ENCODE measurements at regions of chr3 and their contacts with region 1.

Region 1: GRCh38 chr3:12719984-12720898 is 38.8 kb downstream of the TMEM40 start:
- DNase-seq: peak; percentile 75 to 83 (median 78)
- H3K4me3 ChIP-seq: peak overlapping the region in 1 of 2 donors; percentile 22
- H3K4me3 Mint-ChIP-seq: peak overlapping the region; percentile 58 to 82 (median 74)
- H3K27ac ChIP-seq: no peak overlapping the region
- H3K27ac Mint-ChIP-seq: peak overlapping the region; percentile 57 to 95 (median 92)
- H3K4me1 ChIP-seq: peaks cover 5% of the 10 kb centered on the region
- H3K4me1 Mint-ChIP-seq: peaks cover 9 to 15% (median 10%) of the 10 kb centered on the region in 4 donors
- H3K27me3 ChIP-seq: no peaks in the 10 kb centered on the region
- H3K27me3 Mint-ChIP-seq: no peaks in the 10 kb centered on the region

Region 2: DNA sequence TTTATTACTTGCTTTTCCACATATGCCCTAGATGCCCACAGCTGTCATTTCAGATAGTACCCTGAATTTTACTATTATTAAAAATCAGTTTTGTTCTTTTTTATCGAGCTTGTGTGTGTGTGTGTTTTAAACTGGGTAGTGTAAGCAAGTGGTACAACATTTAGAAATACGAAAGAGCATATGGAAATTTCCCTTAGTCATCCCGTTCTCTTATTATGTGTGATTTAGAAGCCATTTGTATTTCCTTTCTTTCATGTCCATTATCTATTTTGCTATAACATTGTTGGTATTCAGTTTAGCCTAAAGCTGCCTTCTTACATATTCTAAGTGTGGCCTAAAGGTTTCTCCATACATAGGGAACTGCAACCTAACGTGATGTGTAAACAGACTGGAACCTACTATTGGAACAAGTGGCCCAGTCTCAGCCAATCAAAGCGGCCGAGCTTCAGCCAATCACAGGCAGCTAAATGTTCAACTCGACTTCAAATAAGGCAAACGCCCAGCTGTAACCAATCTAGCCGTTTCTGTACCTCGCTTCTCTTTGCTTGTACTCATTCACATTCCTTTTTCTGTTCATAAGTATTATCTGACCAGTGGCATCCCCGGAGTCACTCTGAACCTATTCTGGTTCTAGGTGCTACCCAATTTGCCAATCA is 730.7 kb before region 1 on chr3:
- CTCF ChIA-PET with region 1: no interaction called
- POLR2A ChIA-PET with region 1: no interaction called
- intact Hi-C with region 1: no loop called
- DNase-seq: no peak
- H3K4me3 ChIP-seq: no peak overlapping the region
- H3K4me3 Mint-ChIP-seq: no peak overlapping the region
- H3K27ac ChIP-seq: no peak overlapping the region
- H3K27ac Mint-ChIP-seq: no peak overlapping the region
- H3K4me1 ChIP-seq: no peaks in the 10 kb centered on the region
- H3K4me1 Mint-ChIP-seq: no peaks in the 10 kb centered on the region
- H3K27me3 ChIP-seq: no peaks in the 10 kb centered on the region
- H3K27me3 Mint-ChIP-seq: peaks cover 4 to 11% of the 10 kb centered on the region in 2 donors

Region 3: DNA sequence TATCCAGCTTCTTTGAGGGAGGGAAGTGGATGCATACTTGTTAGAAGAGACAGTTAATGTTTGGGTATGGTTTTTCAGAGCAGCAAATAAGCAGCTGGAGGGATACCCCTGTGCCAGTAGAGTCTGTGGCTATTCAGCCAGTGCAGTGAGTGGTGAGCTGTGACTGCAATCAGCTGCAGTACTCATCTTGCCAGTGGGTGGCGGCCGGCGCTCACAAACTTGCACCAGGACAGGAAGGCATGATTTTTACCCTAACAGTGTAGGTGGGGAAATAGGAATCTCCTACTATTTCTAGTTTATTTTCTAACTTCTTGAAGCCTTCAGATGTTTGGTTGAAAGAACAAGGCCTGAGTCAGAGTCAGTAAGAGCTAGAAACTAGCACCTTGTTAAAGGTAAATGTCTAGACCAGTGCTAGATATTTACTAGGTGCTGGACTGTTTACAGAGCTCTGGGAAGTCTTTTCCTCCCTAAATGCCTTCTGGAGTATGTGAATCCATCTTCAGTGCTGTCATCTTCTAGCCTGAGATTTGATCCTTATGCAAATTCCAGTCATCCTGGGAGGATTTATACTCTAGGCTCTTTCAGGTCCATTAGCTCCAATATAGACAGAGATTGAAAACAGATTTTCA is 585.1 kb before region 1 on chr3:
- CTCF ChIA-PET with region 1: interaction called, 10 read pairs
- POLR2A ChIA-PET with region 1: no interaction called
- intact Hi-C with region 1: no loop called
- DNase-seq: peak; percentile 40 to 51 (median 44)
- H3K4me3 ChIP-seq: no peak overlapping the region
- H3K4me3 Mint-ChIP-seq: no peak overlapping the region
- H3K27ac ChIP-seq: no peak overlapping the region
- H3K27ac Mint-ChIP-seq: no peak overlapping the region
- H3K4me1 ChIP-seq: no peaks in the 10 kb centered on the region
- H3K4me1 Mint-ChIP-seq: peaks cover 0 to 2% (median 0%) of the 10 kb centered on the region in 4 donors
- H3K27me3 ChIP-seq: no peaks in the 10 kb centered on the region
- H3K27me3 Mint-ChIP-seq: peaks cover 10 to 20% of the 10 kb centered on the region in 2 donors

Region 4: DNA sequence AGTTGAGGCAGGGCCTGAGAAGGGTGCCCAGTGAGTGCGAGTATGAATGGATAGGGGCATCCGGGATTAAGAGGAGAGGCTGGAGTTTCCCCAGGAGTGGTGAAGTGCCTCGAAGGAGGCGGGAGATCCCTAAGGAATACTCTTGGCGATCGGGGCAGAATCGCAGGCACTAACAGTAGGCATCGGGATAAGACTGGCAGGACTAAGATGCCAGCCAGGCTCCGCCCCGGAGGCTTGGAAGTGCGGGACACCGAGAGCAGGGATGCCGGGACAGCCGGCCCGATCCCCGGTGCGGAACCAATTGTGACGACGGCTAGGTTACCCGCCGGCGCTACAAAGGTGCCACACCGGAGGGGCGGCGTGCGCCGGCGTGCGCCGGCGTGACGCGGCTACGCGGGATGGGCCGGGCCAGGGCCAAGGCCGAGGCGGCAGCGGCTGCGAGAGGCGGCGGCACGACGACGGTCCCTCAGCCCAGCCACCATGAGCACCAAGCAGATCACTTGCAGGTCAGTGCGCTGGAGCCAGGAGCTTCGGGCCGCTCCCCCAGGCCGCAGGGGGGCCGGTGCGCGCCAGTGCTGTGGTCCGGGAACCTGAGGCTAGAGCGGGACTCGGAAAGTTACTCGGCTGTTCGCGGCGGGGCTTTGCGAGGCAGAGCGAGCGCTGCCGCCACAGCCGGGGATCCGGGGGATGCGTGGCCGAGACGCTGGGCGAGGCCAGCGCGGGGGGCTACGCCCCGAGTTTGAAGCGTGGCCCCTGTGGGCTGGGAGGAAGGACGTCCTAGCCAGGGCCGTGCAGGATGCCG is 163.4 kb before region 1 on chr3 and contains the start of gene MKRN2:
- CTCF ChIA-PET with region 1: interaction called, 3 read pairs
- POLR2A ChIA-PET with region 1: no interaction called
- intact Hi-C with region 1: loop called (anchors 2 kb)
- DNase-seq: peak; percentile 81 to 87 (median 82)
- H3K4me3 ChIP-seq: peak within 1 kb of the TSS; percentile 75 to 92
- H3K4me3 Mint-ChIP-seq: peak within 1 kb of the TSS; percentile 89 to 99 (median 94)
- H3K27ac ChIP-seq: peak within 1 kb of the TSS; percentile 93
- H3K27ac Mint-ChIP-seq: peak within 1 kb of the TSS; percentile 88 to 98 (median 95)
- H3K4me1 ChIP-seq: peaks cover 52% of the 10 kb centered on the region
- H3K4me1 Mint-ChIP-seq: peaks cover 43 to 68% (median 55%) of the 10 kb centered on the region in 4 donors
- H3K27me3 ChIP-seq: peaks cover 14% of the 10 kb centered on the region
- H3K27me3 Mint-ChIP-seq: peaks cover 21 to 23% of the 10 kb centered on the region in 2 donors
- total RNA-seq, gene MKRN2: 31.7 to 32.0 TPM

Region 5: DNA sequence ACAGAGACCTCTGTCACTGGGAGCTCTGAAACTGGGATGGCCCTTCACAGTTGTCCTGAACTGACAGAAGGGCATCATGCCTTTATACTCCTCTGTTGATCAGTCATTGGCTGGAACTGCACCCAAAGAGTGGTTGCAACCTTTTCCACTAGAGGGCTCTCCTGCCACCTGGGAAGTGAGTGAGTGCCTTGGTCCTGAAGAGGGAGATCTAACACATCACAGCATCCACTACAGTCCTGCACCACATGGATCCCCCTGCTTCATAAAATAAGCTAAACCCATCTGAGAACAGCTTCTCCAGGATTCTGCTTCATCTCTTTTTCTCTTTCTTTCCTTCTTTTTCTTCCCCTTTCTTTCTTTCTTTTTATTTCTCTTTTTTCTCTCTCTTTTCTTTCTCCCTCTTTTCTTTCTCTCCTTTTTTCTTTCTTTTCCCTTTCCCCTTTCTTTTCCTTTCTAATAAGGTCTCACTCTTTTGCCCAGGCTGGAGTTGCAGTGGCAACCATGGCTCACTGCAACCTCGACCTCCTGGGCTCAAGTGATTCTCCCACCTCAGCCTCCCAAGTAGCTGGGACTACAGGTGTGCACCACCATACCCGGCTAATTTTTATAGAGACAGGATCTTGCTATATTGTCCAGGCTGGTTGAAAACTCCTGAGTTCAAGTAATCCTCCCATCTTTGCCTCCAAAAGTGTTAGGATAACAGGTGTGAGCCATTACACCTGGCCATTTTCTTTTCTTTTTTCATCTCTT is 13.6 kb before region 1 on chr3:
- CTCF ChIA-PET with region 1: interaction called, 11 read pairs
- POLR2A ChIA-PET with region 1: no interaction called
- intact Hi-C with region 1: loop called (anchors 1 kb)
- DNase-seq: peak; percentile 46 to 61 (median 52)
- H3K4me3 ChIP-seq: no peak overlapping the region
- H3K4me3 Mint-ChIP-seq: no peak overlapping the region
- H3K27ac ChIP-seq: no peak overlapping the region
- H3K27ac Mint-ChIP-seq: no peak overlapping the region
- H3K4me1 ChIP-seq: no peaks in the 10 kb centered on the region
- H3K4me1 Mint-ChIP-seq: no peaks in the 10 kb centered on the region
- H3K27me3 ChIP-seq: no peaks in the 10 kb centered on the region
- H3K27me3 Mint-ChIP-seq: peaks cover 1 to 9% of the 10 kb centered on the region in 2 donors

Region 6: DNA sequence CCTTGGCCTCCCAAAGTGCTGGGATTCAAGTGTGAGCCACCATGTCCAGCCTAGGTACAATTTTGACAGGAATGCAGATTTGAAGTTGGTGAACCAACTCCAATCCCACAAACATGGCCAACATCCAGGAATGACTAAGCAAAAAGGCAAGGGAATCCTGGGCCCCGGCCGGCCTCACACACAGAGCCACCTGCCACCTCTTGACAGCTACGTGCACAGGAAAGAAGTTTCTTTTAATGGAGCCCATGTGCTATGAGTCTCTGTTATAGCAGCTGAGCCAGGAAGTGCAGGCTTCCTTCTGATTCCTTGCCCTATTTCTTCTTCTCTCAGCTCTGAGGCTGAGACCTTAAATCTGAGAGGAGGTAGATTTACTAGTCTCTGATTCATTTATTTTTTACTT is 30.0 kb after region 1 on chr3:
- CTCF ChIA-PET with region 1: interaction called, 5 read pairs
- POLR2A ChIA-PET with region 1: no interaction called
- intact Hi-C with region 1: loop called (anchors 2 kb)
- DNase-seq: no peak
- H3K4me3 ChIP-seq: no peak overlapping the region
- H3K4me3 Mint-ChIP-seq: no peak overlapping the region
- H3K27ac ChIP-seq: no peak overlapping the region
- H3K27ac Mint-ChIP-seq: no peak overlapping the region
- H3K4me1 ChIP-seq: no peaks in the 10 kb centered on the region
- H3K4me1 Mint-ChIP-seq: no peaks in the 10 kb centered on the region
- H3K27me3 ChIP-seq: no peaks in the 10 kb centered on the region
- H3K27me3 Mint-ChIP-seq: peaks cover 0 to 5% of the 10 kb centered on the region in 2 donors

Region 7: GRCh38 chr3:12901623-12902045 is 181.4 kb after region 1 on chr3:
- CTCF ChIA-PET with region 1: no interaction called
- POLR2A ChIA-PET with region 1: no interaction called
- intact Hi-C with region 1: no loop called
- DNase-seq: no peak
- H3K4me3 ChIP-seq: no peak overlapping the region
- H3K4me3 Mint-ChIP-seq: no peak overlapping the region
- H3K27ac ChIP-seq: no peak overlapping the region
- H3K27ac Mint-ChIP-seq: no peak overlapping the region
- H3K4me1 ChIP-seq: no peaks in the 10 kb centered on the region
- H3K4me1 Mint-ChIP-seq: peaks cover 0 to 1% (median 0%) of the 10 kb centered on the region in 4 donors
- H3K27me3 ChIP-seq: no peaks in the 10 kb centered on the region
- H3K27me3 Mint-ChIP-seq: no peaks in the 10 kb centered on the region

Region 8: GRCh38 chr3:12967606-12968351 is 247.5 kb after region 1 on chr3:
- CTCF ChIA-PET with region 1: no interaction called
- POLR2A ChIA-PET with region 1: no interaction called
- intact Hi-C with region 1: no loop called
- DNase-seq: peak; percentile 82 to 89 (median 83)
- H3K4me3 ChIP-seq: peak overlapping the region in 1 of 2 donors; percentile 50
- H3K4me3 Mint-ChIP-seq: peak overlapping the region; percentile 67 to 86 (median 82)
- H3K27ac ChIP-seq: peak overlapping the region; percentile 8
- H3K27ac Mint-ChIP-seq: peak overlapping the region; percentile 27 to 89 (median 78)
- H3K4me1 ChIP-seq: peaks cover 68% of the 10 kb centered on the region
- H3K4me1 Mint-ChIP-seq: peaks cover 47 to 87% (median 65%) of the 10 kb centered on the region in 4 donors
- H3K27me3 ChIP-seq: no peaks in the 10 kb centered on the region
- H3K27me3 Mint-ChIP-seq: no peaks in the 10 kb centered on the region

Measured in CD4-positive, alpha-beta memory T cell (primary cell).